Right ventricle myocardium inferior (tissue), 1 donor: ENCODE measurements at regions of chr10 and their contacts with region 1.

Region 1: GRCh38 chr10:50280049-50280841 is 28.9 kb upstream of the ASAH2 start:
- DNase-seq: no peak
- ATAC-seq: no peak

Region 2: GRCh38 chr10:50254471-50254870 is 25.8 kb before region 1 on chr10:
- intact Hi-C with region 1: loop called (anchors 2 kb)
- DNase-seq: no peak
- ATAC-seq: no peak

Region 3: GRCh38 chr10:51340845-51341610 is 1060.8 kb after region 1 on chr10:
- intact Hi-C with region 1: no loop called
- DNase-seq: no peak
- ATAC-seq: no peak